Naive thymus-derived CD4-positive, alpha-beta T cell (primary cell): ENCODE measurements at regions of chr11 and their contacts with region 1.

Region 1: GRCh38 chr11:34051349-34052035 is at the start of gene CAPRIN1:
- DNase-seq: peak; percentile 78 to 92 (median 89)
- ATAC-seq: peak; percentile 87
- H3K4me3 ChIP-seq: peak within 1 kb of the TSS; percentile 95
- H3K4me3 Mint-ChIP-seq: peak within 1 kb of the TSS; percentile 94 to 99 (median 98)
- H3K27ac ChIP-seq: peak within 1 kb of the TSS; percentile 99
- H3K27ac Mint-ChIP-seq: peak within 1 kb of the TSS; percentile 94 to 99 (median 97)
- H3K4me1 ChIP-seq: peaks cover 21 to 27% of the 10 kb centered on the region in 2 donors
- H3K4me1 Mint-ChIP-seq: peaks cover 3 to 42% (median 30%) of the 10 kb centered on the region in 7 donors
- H3K27me3 ChIP-seq: no peaks in the 10 kb centered on the region
- H3K27me3 Mint-ChIP-seq: peaks cover 0 to 6% (median 0%) of the 10 kb centered on the region in 5 donors
- total RNA-seq, gene CAPRIN1: 120 to 227 (median 163) TPM

Region 2: DNA sequence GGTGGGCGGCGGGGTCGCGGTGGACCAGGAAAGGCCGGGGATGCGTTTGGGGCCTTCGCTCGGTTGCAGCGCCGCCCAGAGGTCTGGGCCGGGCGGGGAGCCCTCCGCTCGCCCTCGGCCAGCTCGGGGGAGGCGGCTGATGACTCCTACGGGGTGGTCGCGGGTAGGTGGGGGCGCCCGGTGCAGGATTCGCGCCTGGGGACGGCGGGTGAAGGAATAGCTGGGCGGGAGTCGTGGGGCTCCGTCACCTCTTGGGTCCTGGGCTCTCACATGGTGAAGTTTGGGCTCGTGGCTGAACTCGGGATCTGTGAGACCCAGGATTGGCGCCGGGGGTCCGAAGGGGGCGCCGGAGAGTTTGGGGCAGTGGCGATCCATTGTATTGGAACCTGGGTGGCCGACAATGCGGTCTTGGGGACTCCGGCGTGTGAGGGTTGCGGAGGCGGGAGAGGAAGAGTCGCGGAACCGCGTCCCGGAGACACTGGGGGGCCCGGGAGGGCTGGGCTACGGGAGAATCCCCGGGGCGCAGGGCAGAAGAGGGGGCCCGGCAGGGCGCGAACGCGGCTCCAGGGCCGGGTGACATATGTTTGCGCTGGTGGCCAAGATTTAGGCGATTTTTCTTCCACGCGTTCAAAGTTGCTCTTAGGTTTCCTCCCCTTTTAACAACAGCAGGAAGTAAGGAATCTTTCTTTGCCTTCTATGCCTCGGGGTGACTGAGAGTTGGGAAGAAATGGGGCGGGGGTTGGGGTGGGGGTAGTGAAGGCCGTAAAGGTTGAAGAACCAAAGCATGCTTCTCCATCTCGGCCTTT is 1157.9 kb before region 1 on chr11:
- CTCF ChIA-PET with region 1: no interaction called
- POLR2A ChIA-PET with region 1: no interaction called
- intact Hi-C with region 1: loop called in 1 of 2 experiments (anchors 1 kb)
- DNase-seq: peak in 6 of 9 donors; percentile 34 to 67 (median 42)
- ATAC-seq: peak; percentile 47
- H3K4me3 ChIP-seq: peak overlapping the region; percentile 71
- H3K4me3 Mint-ChIP-seq: peak overlapping the region; percentile 83 to 96 (median 94)
- H3K27ac ChIP-seq: peak overlapping the region; percentile 71
- H3K27ac Mint-ChIP-seq: peak overlapping the region; percentile 58 to 95 (median 80)
- H3K4me1 ChIP-seq: peaks cover 5 to 15% of the 10 kb centered on the region in 2 donors
- H3K4me1 Mint-ChIP-seq: peaks cover 26 to 46% (median 38%) of the 10 kb centered on the region in 7 donors
- H3K27me3 ChIP-seq: no peaks in the 10 kb centered on the region
- H3K27me3 Mint-ChIP-seq: peaks cover 0 to 21% (median 0%) of the 10 kb centered on the region in 5 donors

Region 3: DNA sequence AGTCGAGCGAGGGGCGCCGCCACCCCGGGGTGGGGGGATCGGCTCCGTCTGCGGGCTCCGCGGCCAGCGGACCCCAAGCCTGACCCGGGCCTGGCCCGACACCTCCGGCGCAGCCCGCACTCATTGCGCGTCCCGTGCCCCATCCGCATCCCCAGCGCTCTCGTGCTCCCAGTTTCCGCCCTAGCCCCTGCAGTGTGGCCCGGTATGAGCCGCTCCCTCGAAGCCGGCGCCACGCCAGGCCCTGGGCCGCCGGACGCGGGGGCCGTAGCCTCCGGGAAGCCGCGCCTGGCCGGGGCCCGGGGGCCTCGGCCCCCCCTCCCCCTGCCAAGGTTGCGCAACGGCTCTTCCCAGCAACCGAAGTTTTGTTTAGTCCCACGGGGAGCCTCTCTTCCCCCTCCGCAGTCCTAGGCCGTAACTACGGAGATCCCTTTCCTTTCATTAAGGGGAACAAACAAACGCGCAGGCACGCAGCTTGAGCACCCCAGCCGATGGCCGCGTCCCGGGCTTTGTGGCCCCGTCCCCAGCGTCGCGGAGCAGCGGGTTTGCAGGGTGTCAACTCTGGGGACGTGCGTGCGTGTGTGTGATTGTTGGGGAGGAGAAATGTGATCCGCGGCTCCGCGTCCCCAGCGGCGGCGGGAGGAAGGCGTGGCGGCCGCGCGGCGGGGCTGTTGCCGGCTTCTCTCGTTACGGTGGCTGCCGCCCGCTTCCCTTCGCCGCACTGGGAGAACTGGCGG is 793.4 kb before region 1 on chr11:
- CTCF ChIA-PET with region 1: no interaction called
- POLR2A ChIA-PET with region 1: no interaction called
- intact Hi-C with region 1: loop called (anchors 2 to 5 kb)
- DNase-seq: peak; percentile 67 to 83 (median 76)
- ATAC-seq: peak; percentile 71
- H3K4me3 ChIP-seq: peak overlapping the region; percentile 63
- H3K4me3 Mint-ChIP-seq: peak overlapping the region; percentile 89 to 99 (median 96)
- H3K27ac ChIP-seq: peak overlapping the region; percentile 97
- H3K27ac Mint-ChIP-seq: peak overlapping the region; percentile 93 to 99 (median 98)
- H3K4me1 ChIP-seq: peaks cover 27 to 28% of the 10 kb centered on the region in 2 donors
- H3K4me1 Mint-ChIP-seq: peaks cover 25 to 55% (median 44%) of the 10 kb centered on the region in 7 donors
- H3K27me3 ChIP-seq: no peaks in the 10 kb centered on the region
- H3K27me3 Mint-ChIP-seq: peaks cover 0 to 2% (median 0%) of the 10 kb centered on the region in 5 donors

Region 4: DNA sequence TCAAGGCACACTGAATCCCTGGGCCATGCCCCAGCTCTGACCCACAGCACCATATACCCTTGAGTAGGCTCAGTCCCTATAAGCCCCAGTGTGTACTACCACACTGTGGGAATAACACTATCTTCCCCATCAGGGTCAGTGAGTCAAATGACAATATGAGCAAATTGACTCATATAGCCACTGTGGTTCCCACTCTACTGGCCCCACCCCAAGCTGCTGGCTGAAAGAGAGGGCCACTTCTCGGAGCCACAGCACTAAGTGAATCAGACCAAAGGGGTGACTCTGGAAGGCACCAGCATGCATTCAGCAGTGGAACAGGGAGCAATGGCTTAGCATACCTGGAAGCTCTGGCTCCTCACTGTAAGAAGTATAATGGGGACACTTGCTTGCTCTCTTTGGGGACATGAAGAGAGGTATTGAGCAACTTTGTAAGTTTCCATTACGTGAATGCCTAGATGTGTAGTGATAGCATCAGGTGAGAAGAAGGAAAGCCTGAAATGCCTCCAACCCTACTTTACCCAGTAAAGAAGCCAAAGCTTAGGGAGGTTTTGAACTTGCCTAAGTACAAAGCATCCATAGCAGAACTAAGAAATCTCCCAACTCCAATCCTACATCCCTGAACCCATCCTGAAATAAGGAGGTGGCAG is 328.8 kb before region 1 on chr11:
- CTCF ChIA-PET with region 1: no interaction called
- POLR2A ChIA-PET with region 1: no interaction called
- intact Hi-C with region 1: no loop called
- DNase-seq: peak in 1 of 9 donors; percentile 64
- ATAC-seq: peak; percentile 62
- H3K4me3 ChIP-seq: no peak overlapping the region
- H3K4me3 Mint-ChIP-seq: peak overlapping the region in 1 of 10 donors; percentile 13
- H3K27ac ChIP-seq: no peak overlapping the region
- H3K27ac Mint-ChIP-seq: peak overlapping the region in 1 of 9 donors; percentile 64
- H3K4me1 ChIP-seq: no peaks in the 10 kb centered on the region
- H3K4me1 Mint-ChIP-seq: peaks cover 22 to 60% (median 32%) of the 10 kb centered on the region in 7 donors
- H3K27me3 ChIP-seq: no peaks in the 10 kb centered on the region
- H3K27me3 Mint-ChIP-seq: no peaks in the 10 kb centered on the region

Region 5: GRCh38 chr11:33773987-33774735 is 277.3 kb before region 1 on chr11 and contains the start of gene FBXO3:
- CTCF ChIA-PET with region 1: no interaction called
- POLR2A ChIA-PET with region 1: interaction called, 4 read pairs
- intact Hi-C with region 1: loop called (anchors 1 to 2 kb)
- DNase-seq: peak; percentile 71 to 91 (median 88)
- ATAC-seq: peak; percentile 98
- H3K4me3 ChIP-seq: peak within 1 kb of the TSS; percentile 91
- H3K4me3 Mint-ChIP-seq: peak within 1 kb of the TSS; percentile 93 to 99 (median 97)
- H3K27ac ChIP-seq: peak within 1 kb of the TSS; percentile 83
- H3K27ac Mint-ChIP-seq: peak within 1 kb of the TSS; percentile 93 to 98 (median 96)
- H3K4me1 ChIP-seq: peaks cover 20 to 23% of the 10 kb centered on the region in 2 donors
- H3K4me1 Mint-ChIP-seq: peaks cover 33 to 58% (median 45%) of the 10 kb centered on the region in 7 donors
- H3K27me3 ChIP-seq: no peaks in the 10 kb centered on the region
- H3K27me3 Mint-ChIP-seq: peaks cover 0 to 34% (median 7%) of the 10 kb centered on the region in 5 donors
- total RNA-seq, gene FBXO3: 22.6 to 55.7 (median 47.7) TPM

Region 6: DNA sequence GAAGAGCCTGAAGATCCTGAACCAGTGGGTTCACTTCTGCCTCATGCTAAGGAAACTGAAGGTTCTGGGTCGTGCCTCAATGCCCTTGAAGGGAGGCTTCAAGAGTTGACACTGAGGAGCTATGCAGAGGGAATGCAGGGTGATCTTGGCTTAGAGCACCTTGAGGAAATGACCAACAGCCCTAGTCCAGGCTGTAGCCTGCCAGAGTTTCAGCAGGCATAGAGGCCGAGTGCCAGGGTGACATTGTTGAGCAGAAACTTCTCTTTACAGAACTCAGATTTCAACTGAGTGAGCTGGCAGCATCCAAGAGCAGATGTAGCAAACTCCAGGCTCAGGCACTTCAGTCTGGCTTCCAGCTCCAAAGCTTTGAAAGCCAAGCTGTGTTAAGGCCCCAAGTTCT is 23.1 kb before region 1 on chr11:
- CTCF ChIA-PET with region 1: no interaction called
- POLR2A ChIA-PET with region 1: no interaction called
- intact Hi-C with region 1: no loop called
- DNase-seq: no peak
- ATAC-seq: no peak
- H3K4me3 ChIP-seq: no peak overlapping the region
- H3K4me3 Mint-ChIP-seq: no peak overlapping the region
- H3K27ac ChIP-seq: no peak overlapping the region
- H3K27ac Mint-ChIP-seq: no peak overlapping the region
- H3K4me1 ChIP-seq: no peaks in the 10 kb centered on the region
- H3K4me1 Mint-ChIP-seq: no peaks in the 10 kb centered on the region
- H3K27me3 ChIP-seq: no peaks in the 10 kb centered on the region
- H3K27me3 Mint-ChIP-seq: peaks cover 0 to 11% (median 0%) of the 10 kb centered on the region in 5 donors

Region 7: GRCh38 chr11:34068111-34068510 is 16.6 kb after region 1 on chr11:
- CTCF ChIA-PET with region 1: no interaction called
- POLR2A ChIA-PET with region 1: interaction called, 6 read pairs
- intact Hi-C with region 1: loop called in 1 of 2 experiments (anchors 1 kb)
- DNase-seq: no peak
- ATAC-seq: no peak
- H3K4me3 ChIP-seq: no peak overlapping the region
- H3K4me3 Mint-ChIP-seq: peak overlapping the region in 5 of 10 donors; percentile 1 to 48 (median 12)
- H3K27ac ChIP-seq: no peak overlapping the region
- H3K27ac Mint-ChIP-seq: peak overlapping the region in 5 of 9 donors; percentile 1 to 56 (median 17)
- H3K4me1 ChIP-seq: peaks cover 9 to 14% of the 10 kb centered on the region in 2 donors
- H3K4me1 Mint-ChIP-seq: peaks cover 28 to 76% (median 64%) of the 10 kb centered on the region in 7 donors
- H3K27me3 ChIP-seq: no peaks in the 10 kb centered on the region
- H3K27me3 Mint-ChIP-seq: no peaks in the 10 kb centered on the region

Region 8: DNA sequence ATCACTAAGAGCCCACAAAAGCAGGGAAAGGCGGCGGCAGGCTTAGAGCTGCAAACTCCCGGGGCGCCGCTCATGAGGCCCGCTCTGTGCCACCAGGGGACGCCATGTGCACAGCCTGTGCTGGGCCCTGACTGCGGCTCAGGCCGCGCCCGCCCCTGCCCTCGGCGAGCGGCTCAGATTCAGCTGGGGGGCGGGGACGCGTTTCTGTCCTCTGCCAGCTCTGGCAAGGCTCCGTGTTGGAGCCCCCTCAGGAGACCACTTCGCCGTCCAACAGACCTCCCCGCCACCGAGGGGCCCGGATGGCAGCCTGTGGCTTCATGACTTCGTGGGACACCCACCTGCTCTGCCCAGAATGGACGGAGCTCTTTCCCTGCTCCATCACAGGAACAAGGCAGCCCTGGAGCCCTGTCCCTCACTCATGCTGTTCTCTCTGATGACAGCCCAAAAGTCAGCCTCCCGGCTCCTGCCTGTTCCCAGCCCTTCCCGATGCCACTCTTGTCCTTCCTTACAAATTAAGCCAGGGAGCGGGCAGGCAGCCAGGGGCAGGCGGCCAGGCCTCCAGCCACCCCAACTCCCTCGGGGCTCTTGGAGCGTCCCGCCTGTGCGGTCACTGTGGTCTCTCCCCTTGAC is 123.0 kb after region 1 on chr11:
- CTCF ChIA-PET with region 1: no interaction called
- POLR2A ChIA-PET with region 1: no interaction called
- intact Hi-C with region 1: loop called in 1 of 2 experiments (anchors 5 kb)
- DNase-seq: peak; percentile 60 to 83 (median 73)
- ATAC-seq: peak; percentile 99
- H3K4me3 ChIP-seq: no peak overlapping the region
- H3K4me3 Mint-ChIP-seq: peak overlapping the region; percentile 21 to 81 (median 67)
- H3K27ac ChIP-seq: no peak overlapping the region
- H3K27ac Mint-ChIP-seq: no peak overlapping the region
- H3K4me1 ChIP-seq: peaks cover 0 to 4% of the 10 kb centered on the region in 2 donors
- H3K4me1 Mint-ChIP-seq: peaks cover 0 to 21% (median 4%) of the 10 kb centered on the region in 7 donors
- H3K27me3 ChIP-seq: no peaks in the 10 kb centered on the region
- H3K27me3 Mint-ChIP-seq: peaks cover 0 to 6% (median 0%) of the 10 kb centered on the region in 5 donors

Region 9: DNA sequence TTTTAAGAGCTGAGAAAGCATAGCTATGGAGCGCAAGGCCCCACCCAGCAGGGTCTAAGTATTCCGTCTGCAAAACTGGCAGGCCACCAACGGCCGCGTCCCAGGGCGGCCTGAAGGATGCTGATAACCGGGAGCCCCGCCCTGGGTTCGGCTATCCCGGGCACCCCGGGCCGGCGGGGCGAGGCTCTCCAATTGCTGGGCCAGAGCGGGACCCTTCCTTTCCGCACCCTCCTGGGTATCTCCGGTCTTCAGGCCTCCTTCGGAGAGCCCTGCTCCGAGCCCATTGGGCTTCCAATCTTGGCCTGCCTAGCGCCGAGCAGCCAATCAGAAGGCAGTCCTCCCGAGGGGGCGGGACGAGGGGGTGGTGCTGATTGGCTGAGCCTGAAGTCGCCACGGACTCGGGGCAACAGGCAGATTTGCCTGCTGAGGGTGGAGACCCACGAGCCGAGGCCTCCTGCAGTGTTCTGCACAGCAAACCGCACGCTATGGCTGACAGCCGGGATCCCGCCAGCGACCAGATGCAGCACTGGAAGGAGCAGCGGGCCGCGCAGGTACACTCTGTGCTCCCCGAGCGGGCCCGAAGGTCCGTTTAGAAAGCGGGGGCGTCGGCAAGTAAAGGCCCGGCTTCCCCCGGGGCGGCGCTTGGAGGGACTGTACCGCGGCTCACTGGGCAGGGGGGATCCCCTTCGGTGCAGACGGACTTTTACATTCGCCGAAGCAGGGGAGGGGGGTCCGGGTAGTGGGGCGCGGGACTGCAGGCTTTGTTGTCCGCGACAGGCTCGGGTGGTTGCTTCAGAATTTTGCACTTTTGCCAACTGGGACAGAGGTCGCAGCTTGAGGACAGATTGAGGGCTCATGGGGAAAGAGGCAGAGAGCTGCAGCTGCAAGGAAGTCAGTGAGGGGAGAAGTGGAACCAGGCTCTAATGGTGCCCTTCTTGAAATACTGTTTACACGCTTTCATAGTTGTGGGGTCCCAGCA is 387.3 kb after region 1 on chr11 and contains the start of gene CAT:
- CTCF ChIA-PET with region 1: no interaction called
- POLR2A ChIA-PET with region 1: no interaction called
- intact Hi-C with region 1: loop called (anchors 1 kb)
- DNase-seq: peak; percentile 94 to 98 (median 97)
- ATAC-seq: peak; percentile 98
- H3K4me3 ChIP-seq: peak within 1 kb of the TSS; percentile 90
- H3K4me3 Mint-ChIP-seq: peak within 1 kb of the TSS; percentile 88 to 98 (median 96)
- H3K27ac ChIP-seq: peak within 1 kb of the TSS; percentile 79
- H3K27ac Mint-ChIP-seq: peak within 1 kb of the TSS; percentile 89 to 97 (median 93)
- H3K4me1 ChIP-seq: peaks cover 7 to 19% of the 10 kb centered on the region in 2 donors
- H3K4me1 Mint-ChIP-seq: peaks cover 21 to 47% (median 35%) of the 10 kb centered on the region in 7 donors
- H3K27me3 ChIP-seq: no peaks in the 10 kb centered on the region
- H3K27me3 Mint-ChIP-seq: no peaks in the 10 kb centered on the region
- total RNA-seq, gene CAT: 23.3 to 55.9 (median 42.6) TPM